ENCODE measurements at regions of chr9 and their contacts with region 1.

Region 1: DNA sequence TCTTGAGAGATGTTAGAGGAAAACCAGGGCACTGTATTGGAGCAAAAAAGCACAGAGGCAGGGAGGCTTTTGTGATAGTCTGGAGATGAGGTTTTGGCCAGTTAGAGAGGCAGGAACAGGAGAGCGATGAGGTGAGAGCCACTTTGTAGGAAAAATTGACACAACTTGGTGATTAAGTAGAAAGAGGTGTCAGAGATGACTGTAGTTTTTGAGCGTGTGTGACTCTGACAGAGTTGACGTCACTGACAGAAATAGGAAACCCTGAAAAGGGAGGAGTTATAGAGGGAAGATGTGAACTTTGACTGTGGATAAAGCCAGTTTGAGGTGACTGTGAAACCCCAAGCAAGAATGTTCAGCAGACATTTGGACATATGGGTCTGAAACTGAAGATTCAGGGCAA is 15.7 kb downstream of the NFX1 start:
- DNase-seq: no peak
- H3K4me3 ChIP-seq: no peak overlapping the region
- H3K27ac ChIP-seq: no peak overlapping the region
- H3K4me1 ChIP-seq: no peaks in the 10 kb centered on the region
- H3K27me3 ChIP-seq: no peaks in the 10 kb centered on the region
- CTCF ChIP-seq: no peak
- EP300 ChIP-seq: no peak
- POLR2A ChIP-seq: no peak

Region 2: DNA sequence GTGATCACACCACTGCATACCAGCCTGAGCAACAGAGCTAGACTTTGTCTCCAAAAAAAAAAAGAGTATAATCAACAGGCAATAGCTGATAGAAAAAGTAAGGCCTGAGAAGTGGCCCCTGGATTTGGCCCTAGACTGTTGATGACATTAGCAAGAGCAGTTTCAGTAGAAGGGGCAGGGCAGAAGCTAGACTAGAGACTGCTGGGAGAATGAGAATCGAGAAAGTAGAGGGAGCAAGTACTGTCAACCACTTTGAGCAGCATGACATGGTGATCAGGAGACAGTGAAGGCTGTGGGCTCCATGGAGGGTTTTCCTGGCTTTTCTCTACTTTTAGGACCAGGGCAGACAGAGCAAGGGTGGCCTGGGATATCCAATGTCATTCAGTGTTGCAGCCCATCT is 104.0 kb before region 1 on chr9:
- intact Hi-C with region 1: no loop called
- DNase-seq: no peak
- H3K4me3 ChIP-seq: no peak overlapping the region
- H3K27ac ChIP-seq: no peak overlapping the region
- H3K4me1 ChIP-seq: no peaks in the 10 kb centered on the region
- H3K27me3 ChIP-seq: no peaks in the 10 kb centered on the region
- CTCF ChIP-seq: no peak
- EP300 ChIP-seq: no peak
- POLR2A ChIP-seq: no peak

Region 3: DNA sequence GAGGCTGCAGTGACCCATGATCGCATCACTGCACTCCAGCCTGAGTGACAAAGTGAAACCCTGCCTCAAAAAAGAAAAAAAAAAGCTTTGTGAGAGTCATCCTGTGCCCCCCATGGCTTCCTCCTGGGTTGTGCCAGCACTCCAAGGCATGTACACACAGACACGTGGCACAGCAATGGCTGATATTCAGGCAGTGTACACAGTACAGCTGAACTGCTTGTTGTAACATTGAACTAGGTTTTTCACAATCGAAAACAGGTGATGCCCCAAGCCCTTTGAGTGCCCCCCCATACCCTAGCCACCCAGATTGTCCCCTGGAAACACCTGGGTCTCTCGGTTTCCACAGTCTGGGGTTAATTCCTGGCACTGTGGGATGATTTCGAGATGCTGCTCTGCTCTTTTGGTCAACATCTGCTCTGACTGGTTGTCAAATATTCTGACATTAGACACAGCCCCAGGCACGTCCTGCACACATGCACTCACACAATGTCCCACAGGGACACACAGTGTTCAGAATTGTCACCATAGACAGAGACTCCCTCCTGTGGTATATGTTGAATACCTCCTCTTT is 56.9 kb before region 1 on chr9:
- intact Hi-C with region 1: no loop called
- DNase-seq: no peak
- H3K4me3 ChIP-seq: no peak overlapping the region
- H3K27ac ChIP-seq: no peak overlapping the region
- H3K4me1 ChIP-seq: no peaks in the 10 kb centered on the region
- H3K27me3 ChIP-seq: no peaks in the 10 kb centered on the region
- CTCF ChIP-seq: no peak
- EP300 ChIP-seq: no peak
- POLR2A ChIP-seq: no peak

Region 4: DNA sequence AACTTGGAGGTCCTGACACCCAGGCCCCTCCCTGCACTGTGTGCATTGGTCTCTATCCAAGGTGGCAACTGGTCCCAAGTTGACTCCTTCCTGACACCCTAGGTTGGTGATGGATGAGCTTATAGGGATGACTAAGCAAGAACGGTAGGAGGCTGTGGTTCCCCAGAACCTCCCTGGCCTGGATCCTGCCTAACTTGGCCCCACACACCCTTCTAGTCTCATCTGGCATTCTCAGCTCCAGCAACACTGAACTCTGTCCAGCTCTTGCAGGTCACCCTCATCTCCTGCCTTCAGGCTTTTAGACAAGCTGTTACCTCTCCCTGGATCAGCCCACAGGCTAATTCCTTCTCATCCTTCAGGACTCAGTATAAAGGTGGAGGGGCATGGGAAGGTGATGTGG is 124.9 kb after region 1 on chr9:
- intact Hi-C with region 1: loop called in 1 of 4 experiments (anchors 10 kb)
- DNase-seq: no peak
- H3K4me3 ChIP-seq: no peak overlapping the region
- H3K27ac ChIP-seq: no peak overlapping the region
- H3K4me1 ChIP-seq: no peaks in the 10 kb centered on the region
- H3K27me3 ChIP-seq: no peaks in the 10 kb centered on the region
- CTCF ChIP-seq: no peak
- EP300 ChIP-seq: no peak
- POLR2A ChIP-seq: no peak

Region 5: GRCh38 chr9:33623658-33624586 is 317.9 kb after region 1 on chr9:
- intact Hi-C with region 1: no loop called
- DNase-seq: peak; percentile 18 to 62 (median 42)
- H3K4me3 ChIP-seq: no peak overlapping the region
- H3K27ac ChIP-seq: no peak overlapping the region
- H3K4me1 ChIP-seq: no peaks in the 10 kb centered on the region
- H3K27me3 ChIP-seq: no peaks in the 10 kb centered on the region
- CTCF ChIP-seq: peak; percentile 19 to 71 (median 60)
- EP300 ChIP-seq: no peak
- POLR2A ChIP-seq: no peak

Measured in ovary (tissue), 10 donors.